ENCODE measurements at regions of chr9 and their contacts with region 1.

Region 1: DNA sequence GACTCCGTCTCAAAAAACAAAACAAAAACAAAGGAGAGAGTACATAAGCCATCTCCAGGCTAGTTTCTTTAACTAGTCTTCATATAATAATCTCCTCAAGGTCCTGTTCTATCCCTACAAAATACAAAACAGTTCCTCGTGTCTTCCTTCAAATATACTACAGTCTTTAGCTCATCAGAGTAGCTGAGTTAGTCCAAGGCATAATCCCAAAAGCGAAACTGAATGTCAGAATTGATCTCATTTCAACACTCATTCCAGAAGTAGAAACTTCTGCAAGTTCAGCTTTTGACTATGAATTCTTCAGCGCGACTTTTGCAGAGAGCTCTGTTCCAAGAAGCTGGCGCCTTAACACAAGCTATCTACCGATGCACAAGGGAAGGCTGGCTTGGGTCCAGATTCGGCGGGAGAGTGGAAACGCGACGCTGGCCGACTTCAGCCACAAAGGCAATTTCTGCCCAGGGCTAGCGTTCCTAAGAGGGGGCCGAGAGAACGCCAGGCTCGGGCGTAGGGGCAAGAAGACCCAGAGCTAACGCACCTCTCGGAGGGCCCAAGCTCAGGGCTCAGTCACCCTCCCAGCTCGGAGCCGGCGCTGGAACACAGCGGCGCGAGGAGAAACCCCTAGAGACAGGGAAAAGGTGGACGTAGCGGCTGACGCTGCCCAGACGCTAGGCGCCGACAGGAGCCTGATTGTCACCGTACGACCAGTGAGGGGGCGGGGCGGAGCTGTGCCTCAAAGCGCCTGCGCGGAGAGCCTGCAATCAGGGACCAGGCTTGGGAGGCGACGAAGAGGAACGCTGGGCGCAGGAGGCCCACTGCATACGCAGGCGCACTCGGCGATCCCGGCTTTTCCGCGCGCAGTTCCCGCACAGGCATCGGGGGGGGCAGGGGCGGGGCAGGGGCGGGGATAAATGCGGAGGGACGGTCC is 469 bp upstream of the HSDL2 start:
- DNase-seq: peak; percentile 100
- ATAC-seq: peak; percentile 96
- H3K4me3 ChIP-seq: peak overlapping the region; percentile 60 to 74
- H3K27ac ChIP-seq: peak overlapping the region; percentile 95 to 98 (median 98)
- H3K4me1 ChIP-seq: peaks cover 42% of the 10 kb centered on the region
- H3K27me3 ChIP-seq: no peaks in the 10 kb centered on the region
- CTCF ChIP-seq: peak in 4 of 7 experiments; percentile 7 to 37 (median 18)
- POLR2A ChIP-seq: peak; percentile 96 to 99 (median 99)

Region 2: GRCh38 chr9:112097712-112098688 is 281.4 kb before region 1 on chr9:
- intact Hi-C with region 1: loop called (anchors 10 kb)
- DNase-seq: peak; percentile 59 to 67 (median 64)
- ATAC-seq: peak; percentile 79
- H3K4me3 ChIP-seq: no peak overlapping the region
- H3K27ac ChIP-seq: no peak overlapping the region
- H3K4me1 ChIP-seq: no peaks in the 10 kb centered on the region
- H3K27me3 ChIP-seq: no peaks in the 10 kb centered on the region
- CTCF ChIP-seq: peak; percentile 75 to 92 (median 81)
- POLR2A ChIP-seq: no peak

Region 3: GRCh38 chr9:112433499-112434392 is 54.3 kb after region 1 on chr9:
- intact Hi-C with region 1: no loop called
- DNase-seq: no peak
- ATAC-seq: no peak
- H3K4me3 ChIP-seq: no peak overlapping the region
- H3K27ac ChIP-seq: no peak overlapping the region
- H3K4me1 ChIP-seq: no peaks in the 10 kb centered on the region
- H3K27me3 ChIP-seq: no peaks in the 10 kb centered on the region
- CTCF ChIP-seq: no peak
- POLR2A ChIP-seq: no peak

Region 4: GRCh38 chr9:112487008-112487798 is 107.8 kb after region 1 on chr9:
- intact Hi-C with region 1: no loop called
- DNase-seq: peak; percentile 64 to 81 (median 72)
- ATAC-seq: peak; percentile 74
- H3K4me3 ChIP-seq: peak overlapping the region; percentile 76 to 96
- H3K27ac ChIP-seq: peak overlapping the region; percentile 59 to 90 (median 86)
- H3K4me1 ChIP-seq: peaks cover 37% of the 10 kb centered on the region
- H3K27me3 ChIP-seq: no peaks in the 10 kb centered on the region
- CTCF ChIP-seq: no peak
- POLR2A ChIP-seq: no peak

Region 5: GRCh38 chr9:112601636-112602035 is 222.2 kb after region 1 on chr9:
- intact Hi-C with region 1: no loop called
- DNase-seq: no peak
- ATAC-seq: no peak
- H3K4me3 ChIP-seq: no peak overlapping the region
- H3K27ac ChIP-seq: no peak overlapping the region
- H3K4me1 ChIP-seq: no peaks in the 10 kb centered on the region
- H3K27me3 ChIP-seq: no peaks in the 10 kb centered on the region
- CTCF ChIP-seq: no peak
- POLR2A ChIP-seq: no peak